BJ (cell line): ENCODE measurements at regions of chr14 and their contacts with region 1.

Region 1: GRCh38 chr14:23562268-23563203 is 5.1 kb downstream of the AP1G2 start:
- DNase-seq: no peak
- H3K4me3 ChIP-seq: no peak overlapping the region
- H3K27me3 ChIP-seq: no peaks in the 10 kb centered on the region
- CTCF ChIP-seq: peak; percentile 93

Region 2: DNA sequence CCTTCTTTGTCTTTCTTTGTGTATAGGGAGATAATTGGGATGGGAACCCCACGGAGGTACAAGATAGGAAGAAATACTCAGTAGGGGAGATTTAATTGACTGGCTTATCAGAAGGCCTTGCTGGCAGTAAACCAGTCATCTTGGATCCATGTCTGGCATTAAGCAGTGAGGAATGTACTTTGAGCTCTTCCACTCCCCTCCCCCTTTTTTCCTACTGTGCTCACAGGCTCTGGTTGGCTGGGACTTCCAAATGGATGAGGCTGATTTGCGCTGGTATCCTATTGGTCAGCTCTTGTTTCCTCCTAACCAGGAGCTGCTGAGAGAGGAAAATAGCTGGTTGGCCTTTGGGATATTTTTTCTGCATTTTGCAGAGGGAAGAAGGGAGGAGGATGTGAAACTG is 68.3 kb before region 1 on chr14:
- CTCF ChIA-PET with region 1: interaction called, 42 read pairs
- POLR2A ChIA-PET with region 1: no interaction called
- DNase-seq: no peak
- H3K4me3 ChIP-seq: no peak overlapping the region
- H3K27me3 ChIP-seq: no peaks in the 10 kb centered on the region
- CTCF ChIP-seq: no peak